ENCODE measurements at regions of chr1 and their contacts with region 1.

Region 1: DNA sequence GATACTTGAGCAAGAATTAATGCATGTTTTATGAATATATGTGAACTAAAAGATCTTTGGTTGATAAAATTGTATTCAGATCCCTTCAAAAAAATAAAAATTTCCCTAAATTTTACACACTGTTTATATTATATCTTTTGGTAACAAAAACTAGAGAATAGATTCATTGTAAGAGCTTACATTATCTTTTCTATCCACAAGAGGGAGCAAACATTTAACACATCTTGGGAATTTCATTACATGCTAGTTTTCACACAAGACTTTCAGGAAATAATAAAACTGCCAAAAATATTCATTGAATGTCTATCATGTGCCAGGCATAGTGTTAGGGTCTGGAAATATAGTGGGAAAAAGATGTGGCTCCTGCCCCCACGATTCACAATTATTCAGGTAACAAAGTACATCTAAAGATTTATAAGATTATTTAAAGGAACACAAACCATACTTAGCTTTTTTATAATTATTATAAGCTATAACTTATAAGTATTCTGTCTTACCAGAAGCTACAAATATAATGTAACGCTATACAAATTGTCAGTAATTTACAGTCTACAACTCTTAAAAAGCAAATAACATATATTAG is 30.6 kb downstream of the FAF1 start:
- DNase-seq: no peak
- ATAC-seq: no peak
- H3K4me3 ChIP-seq: no peak overlapping the region
- H3K27ac ChIP-seq: no peak overlapping the region
- H3K4me1 ChIP-seq: peaks cover 0 to 19% (median 9%) of the 10 kb centered on the region in 9 donors
- H3K27me3 ChIP-seq: no peaks in the 10 kb centered on the region
- CTCF ChIP-seq: peak; percentile 13 to 77 (median 59)

Region 2: GRCh38 chr1:50808296-50808695 is 121.2 kb before region 1 on chr1:
- intact Hi-C with region 1: no loop called
- DNase-seq: no peak
- ATAC-seq: no peak
- H3K4me3 ChIP-seq: no peak overlapping the region
- H3K27ac ChIP-seq: no peak overlapping the region
- H3K4me1 ChIP-seq: peaks cover 0 to 9% (median 0%) of the 10 kb centered on the region in 9 donors
- H3K27me3 ChIP-seq: no peaks in the 10 kb centered on the region
- CTCF ChIP-seq: no peak

Region 3: GRCh38 chr1:50989694-50990093 is 60.2 kb after region 1 on chr1:
- intact Hi-C with region 1: loop called in 1 of 10 experiments (anchors 10 kb)
- DNase-seq: no peak
- ATAC-seq: no peak
- H3K4me3 ChIP-seq: no peak overlapping the region
- H3K27ac ChIP-seq: no peak overlapping the region
- H3K4me1 ChIP-seq: no peaks in the 10 kb centered on the region
- H3K27me3 ChIP-seq: peaks cover 0 to 10% (median 0%) of the 10 kb centered on the region in 7 donors
- CTCF ChIP-seq: no peak

Measured in heart right ventricle (tissue), 16 donors.